CD4-positive, alpha-beta memory T cell (primary cell): ENCODE measurements at regions of chr18 and their contacts with region 1.

Region 1: DNA sequence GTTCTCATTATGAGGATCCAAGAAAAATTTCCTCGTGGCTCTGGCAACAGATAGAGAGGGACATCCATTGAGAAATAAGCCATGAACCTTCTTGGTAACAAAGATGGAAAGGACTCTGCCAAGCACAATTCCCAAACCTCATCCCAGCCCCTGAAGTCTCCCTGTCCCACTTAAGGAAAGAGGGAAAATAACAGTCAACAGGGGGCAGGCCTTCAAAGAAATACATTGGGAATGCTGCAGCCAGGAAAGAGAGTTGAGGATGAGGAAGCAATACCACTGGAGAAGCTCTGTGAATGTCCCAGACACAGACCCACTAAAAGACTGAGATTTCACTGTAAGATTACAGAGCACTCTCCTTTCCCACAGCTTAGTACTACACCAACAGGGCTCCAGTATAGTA is 93.2 kb downstream of the CD226 start:
- DNase-seq: no peak
- H3K4me3 ChIP-seq: no peak overlapping the region
- H3K4me3 Mint-ChIP-seq: no peak overlapping the region
- H3K27ac ChIP-seq: no peak overlapping the region
- H3K27ac Mint-ChIP-seq: peak overlapping the region in 3 of 7 donors; percentile 19 to 58 (median 54)
- H3K4me1 ChIP-seq: no peaks in the 10 kb centered on the region
- H3K4me1 Mint-ChIP-seq: peaks cover 0 to 10% (median 2%) of the 10 kb centered on the region in 4 donors
- H3K27me3 ChIP-seq: no peaks in the 10 kb centered on the region
- H3K27me3 Mint-ChIP-seq: no peaks in the 10 kb centered on the region

Region 2: DNA sequence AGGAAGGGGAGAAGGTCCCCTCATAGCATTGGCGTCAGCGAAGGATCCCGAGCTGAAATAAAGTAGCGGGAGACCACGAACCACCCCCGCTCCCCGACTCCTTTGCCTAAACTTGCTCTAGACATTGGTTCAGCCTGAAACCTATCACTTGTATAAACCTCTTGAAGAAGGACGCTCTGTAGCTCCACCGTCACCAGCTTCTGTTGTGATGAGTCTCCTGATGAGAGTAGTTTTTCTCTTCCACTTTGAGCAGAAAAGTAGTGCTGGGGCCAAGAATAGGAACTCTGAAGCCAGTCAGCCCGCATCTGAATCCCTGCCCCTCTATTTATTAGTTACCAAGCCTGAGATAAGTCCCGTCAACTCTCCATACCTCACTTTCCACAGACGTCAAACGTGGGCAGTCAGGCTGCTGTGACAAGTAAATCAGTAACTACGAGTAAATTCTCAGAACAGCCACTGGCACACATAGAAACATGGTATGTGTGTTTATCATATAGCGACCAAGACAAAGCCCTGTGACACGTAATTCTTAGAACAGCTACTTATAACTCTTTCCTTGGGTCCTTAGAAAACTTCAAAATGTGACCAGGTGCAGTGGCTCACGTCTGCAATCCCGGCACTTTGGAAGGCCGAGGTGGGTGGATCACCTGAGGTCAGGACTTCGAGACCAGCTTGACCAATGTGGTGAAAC is 31.5 kb after region 1 on chr18:
- CTCF ChIA-PET with region 1: interaction called, 3 read pairs
- POLR2A ChIA-PET with region 1: no interaction called
- intact Hi-C with region 1: loop called (anchors 5 kb)
- DNase-seq: peak; percentile 21 to 71 (median 26)
- H3K4me3 ChIP-seq: peak overlapping the region in 1 of 2 donors; percentile 17
- H3K4me3 Mint-ChIP-seq: peak overlapping the region; percentile 61 to 88 (median 85)
- H3K27ac ChIP-seq: peak overlapping the region; percentile 25
- H3K27ac Mint-ChIP-seq: peak overlapping the region; percentile 69 to 96 (median 95)
- H3K4me1 ChIP-seq: peaks cover 74% of the 10 kb centered on the region
- H3K4me1 Mint-ChIP-seq: peaks cover 59 to 94% (median 75%) of the 10 kb centered on the region in 4 donors
- H3K27me3 ChIP-seq: no peaks in the 10 kb centered on the region
- H3K27me3 Mint-ChIP-seq: no peaks in the 10 kb centered on the region